Heart left ventricle (tissue), 16 donors: ENCODE measurements at regions of chr9 and their contacts with region 1.

Region 1: DNA sequence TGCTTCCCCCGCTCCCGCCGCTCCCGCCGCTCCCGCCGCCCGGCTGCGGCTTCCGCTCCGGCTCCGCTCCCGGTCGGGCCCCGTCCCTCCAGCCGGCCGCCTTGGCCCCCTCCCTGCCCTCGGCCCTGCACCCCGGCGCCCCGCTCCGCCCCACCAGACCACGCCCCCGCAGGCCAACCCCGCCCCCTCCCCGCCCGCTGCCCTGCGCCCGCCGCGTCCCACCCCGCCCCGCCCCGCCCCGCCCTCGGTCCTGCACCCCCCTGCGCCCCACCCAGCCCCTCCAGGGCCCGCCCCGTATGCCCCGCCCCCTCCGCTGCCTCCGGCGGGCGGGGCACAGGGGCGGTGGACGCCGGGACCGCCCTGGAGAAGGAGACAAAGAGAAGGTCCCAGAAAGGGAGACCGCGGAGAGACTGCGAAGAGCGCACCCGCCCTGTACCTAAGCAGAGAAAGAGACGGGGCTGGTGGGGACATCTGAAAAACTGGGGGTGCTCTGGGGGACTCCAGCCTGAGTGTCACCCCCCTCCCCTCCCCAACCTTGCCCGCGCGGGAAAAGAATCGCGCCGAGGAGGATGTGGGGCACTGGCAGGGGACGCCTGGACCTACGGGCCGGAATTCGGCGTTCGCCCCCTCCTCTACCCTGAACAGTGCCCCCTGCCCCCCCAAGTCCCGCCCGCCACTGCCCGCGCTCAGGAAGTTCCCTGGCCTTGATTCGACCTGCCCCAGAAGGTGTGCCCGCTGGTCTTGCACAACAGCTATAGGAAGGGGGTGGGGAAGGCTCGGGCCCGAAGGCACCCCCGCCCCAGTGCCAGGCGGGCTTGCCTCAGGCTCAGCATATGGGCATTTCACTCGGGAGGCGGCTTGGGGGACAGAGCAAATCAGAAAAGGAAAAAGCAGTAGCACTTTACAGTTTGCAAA is 42.8 kb upstream of the STXBP1 start:
- DNase-seq: peak; percentile 80 to 92 (median 87)
- ATAC-seq: peak; percentile 79 to 92 (median 90)
- H3K4me3 ChIP-seq: peak overlapping the region; percentile 69 to 99 (median 82)
- H3K27ac ChIP-seq: peak overlapping the region; percentile 87 to 96 (median 90)
- H3K4me1 ChIP-seq: peaks cover 0 to 66% (median 37%) of the 10 kb centered on the region in 12 donors
- H3K27me3 ChIP-seq: no peaks in the 10 kb centered on the region
- CTCF ChIP-seq: no peak
- POLR2A ChIP-seq: peak in 1 of 2 donors; percentile 60

Region 2: DNA sequence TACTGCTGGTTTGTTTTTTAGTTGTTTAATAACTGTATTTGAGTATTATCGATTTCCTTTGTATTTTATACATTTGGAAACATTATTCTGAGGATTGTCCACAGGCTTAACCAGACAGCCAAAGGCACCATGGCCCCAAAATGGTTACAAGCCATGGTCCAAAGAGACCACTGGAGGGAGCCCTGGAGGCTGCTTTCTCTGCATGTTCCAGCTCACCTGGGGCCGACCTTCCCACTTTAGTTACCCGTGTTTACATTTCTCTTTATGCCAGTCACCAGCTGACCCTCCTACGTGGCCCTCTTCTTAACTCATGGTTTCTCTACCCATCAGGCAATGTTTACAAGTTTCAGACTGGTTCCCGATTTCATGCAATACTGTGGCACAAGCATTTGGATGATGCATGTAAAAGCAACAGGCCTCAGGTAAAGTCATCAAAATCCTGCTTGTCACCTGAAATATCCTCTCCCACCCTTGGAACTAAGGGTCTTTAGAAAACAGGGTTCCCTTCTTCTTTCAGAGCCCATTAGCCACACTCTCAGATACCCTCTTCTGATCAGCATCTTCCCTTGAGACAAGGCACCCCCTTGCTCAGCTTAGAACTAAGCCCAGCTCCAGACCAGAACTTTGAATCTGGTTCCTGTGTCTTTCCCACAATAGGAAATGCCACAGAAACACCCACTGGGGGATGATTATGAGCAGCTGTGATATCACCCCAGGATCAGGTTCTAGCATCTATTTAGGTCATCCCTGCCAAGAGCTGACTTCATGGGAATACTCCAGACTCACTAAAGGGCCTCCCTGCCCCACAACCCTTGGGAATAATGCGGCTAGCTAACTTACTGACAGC is 354.6 kb before region 1 on chr9:
- intact Hi-C with region 1: loop called in 1 of 10 experiments (anchors 10 kb)
- DNase-seq: peak in 1 of 5 donors; percentile 53
- ATAC-seq: peak in 3 of 4 donors; percentile 27 to 60 (median 59)
- H3K4me3 ChIP-seq: no peak overlapping the region
- H3K27ac ChIP-seq: no peak overlapping the region
- H3K4me1 ChIP-seq: peaks cover 0 to 8% (median 0%) of the 10 kb centered on the region in 12 donors
- H3K27me3 ChIP-seq: no peaks in the 10 kb centered on the region
- CTCF ChIP-seq: peak; percentile 58 to 82 (median 74)
- POLR2A ChIP-seq: no peak

Region 3: DNA sequence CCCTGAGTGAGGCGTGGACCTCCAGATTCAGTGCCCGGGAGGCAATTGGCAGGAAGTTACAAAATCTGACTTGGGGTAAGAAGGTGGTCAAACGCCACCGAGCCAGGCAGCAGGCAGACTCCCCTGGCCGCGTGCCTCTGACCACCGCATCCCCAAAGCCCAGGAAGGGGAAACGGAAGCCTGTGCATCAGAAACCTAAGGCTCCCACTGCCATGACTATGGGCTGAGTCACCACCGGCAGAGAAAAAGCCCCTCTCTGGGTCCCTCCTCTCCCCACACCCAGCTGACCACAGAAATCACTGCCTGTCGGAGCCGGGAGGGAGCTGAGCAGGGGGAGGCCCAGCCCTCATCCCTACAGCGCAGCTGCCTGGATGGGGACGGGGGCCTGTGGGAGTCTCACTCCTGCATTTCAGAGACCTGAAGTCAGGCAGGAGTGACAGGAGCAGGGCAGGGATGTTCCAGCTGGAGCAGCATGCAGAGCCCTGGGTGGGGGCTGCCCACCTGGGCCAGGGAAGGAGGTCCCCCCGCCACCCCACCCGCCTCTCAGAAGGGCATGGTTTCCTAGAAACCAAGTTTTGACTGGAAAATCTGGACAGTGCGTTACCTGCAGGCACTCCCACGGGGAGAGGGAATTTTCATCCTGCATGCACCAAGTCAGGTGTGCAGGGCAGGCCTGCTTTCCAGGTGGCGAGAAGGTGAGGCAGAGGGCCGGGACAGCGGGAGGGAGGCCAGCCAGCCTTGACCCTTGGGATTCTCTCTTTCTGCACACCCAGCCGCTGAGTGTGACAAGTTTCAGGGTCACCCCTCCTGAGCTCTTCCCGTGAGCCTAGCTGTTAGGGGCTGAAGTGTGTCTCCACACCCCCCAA is 49.7 kb before region 1 on chr9:
- intact Hi-C with region 1: loop called in 4 of 10 experiments (anchors 5 kb)
- DNase-seq: peak in 4 of 5 donors; percentile 47 to 68 (median 60)
- ATAC-seq: peak in 3 of 4 donors; percentile 37 to 66 (median 38)
- H3K4me3 ChIP-seq: no peak overlapping the region
- H3K27ac ChIP-seq: peak overlapping the region in 11 of 12 donors; percentile 41 to 97 (median 76)
- H3K4me1 ChIP-seq: peaks cover 15 to 55% (median 37%) of the 10 kb centered on the region in 12 donors
- H3K27me3 ChIP-seq: no peaks in the 10 kb centered on the region
- CTCF ChIP-seq: no peak
- POLR2A ChIP-seq: no peak

Region 4: GRCh38 chr9:127525401-127526187 is 43.6 kb before region 1 on chr9:
- intact Hi-C with region 1: loop called in 8 of 10 experiments (anchors 2 to 5 kb)
- DNase-seq: peak in 2 of 5 donors; percentile 17 to 23
- ATAC-seq: peak in 3 of 4 donors; percentile 24 to 57 (median 48)
- H3K4me3 ChIP-seq: no peak overlapping the region
- H3K27ac ChIP-seq: peak overlapping the region in 11 of 12 donors; percentile 26 to 89 (median 56)
- H3K4me1 ChIP-seq: peaks cover 19 to 91% (median 63%) of the 10 kb centered on the region in 12 donors
- H3K27me3 ChIP-seq: no peaks in the 10 kb centered on the region
- CTCF ChIP-seq: peak; percentile 30 to 68 (median 44)
- POLR2A ChIP-seq: no peak

Region 5: GRCh38 chr9:127763918-127764384 is 194.7 kb after region 1 on chr9:
- intact Hi-C with region 1: no loop called
- DNase-seq: peak; percentile 73 to 85 (median 81)
- ATAC-seq: peak; percentile 66 to 83 (median 76)
- H3K4me3 ChIP-seq: no peak overlapping the region
- H3K27ac ChIP-seq: peak overlapping the region; percentile 45 to 96 (median 88)
- H3K4me1 ChIP-seq: peaks cover 9 to 97% (median 55%) of the 10 kb centered on the region in 12 donors
- H3K27me3 ChIP-seq: peaks cover 0 to 2% (median 0%) of the 10 kb centered on the region in 9 donors
- CTCF ChIP-seq: peak in 11 of 12 donors; percentile 37 to 63 (median 48)
- POLR2A ChIP-seq: peak in 1 of 2 donors; percentile 23